Esophagus muscularis mucosa (tissue), 4 donors: ENCODE measurements at regions of chr12 and their contacts with region 1.

Region 1: DNA sequence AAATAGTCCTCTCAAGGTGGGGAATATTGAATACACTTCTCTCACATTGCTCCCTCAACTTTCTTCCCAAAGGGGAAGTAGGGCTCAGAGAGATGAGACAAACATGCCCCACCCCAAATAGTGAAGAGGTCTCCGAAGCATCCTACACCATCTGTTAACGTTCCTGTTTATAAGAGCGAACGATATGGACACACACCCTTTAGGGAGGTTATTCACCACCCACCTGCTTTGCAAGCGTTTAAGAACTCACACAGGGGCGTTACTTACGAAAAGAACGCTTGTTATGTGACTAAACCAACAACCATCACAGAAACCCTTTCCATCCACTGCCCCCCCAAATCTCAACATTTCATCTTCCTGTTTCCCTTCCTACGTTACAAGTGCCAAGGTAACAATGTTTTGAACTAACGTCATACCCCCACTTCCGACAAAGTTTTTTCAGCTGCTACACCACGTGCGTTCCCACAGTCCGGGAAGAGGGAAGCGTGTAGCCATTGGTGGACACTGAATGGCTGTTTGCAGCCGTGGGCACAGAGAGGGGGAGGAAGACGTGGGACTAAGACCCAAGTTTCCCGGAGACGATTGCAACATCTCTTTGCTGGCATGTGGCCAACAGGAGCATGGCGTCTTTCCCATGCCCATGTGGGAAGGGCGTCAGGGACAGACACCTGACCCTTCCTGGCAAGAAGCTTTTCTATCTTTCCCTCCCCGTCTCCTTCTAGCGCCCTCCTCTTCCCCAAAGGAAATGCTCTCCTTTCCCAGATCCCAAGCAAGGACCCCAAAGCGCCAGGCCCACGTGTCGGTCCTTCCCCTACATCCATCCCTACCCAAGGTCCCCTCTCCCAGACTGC is 1.2 kb downstream of the YBX3 start:
- DNase-seq: peak; percentile 99
- H3K4me3 ChIP-seq: peak overlapping the region; percentile 89 to 97 (median 94)
- H3K27ac ChIP-seq: peak overlapping the region; percentile 96 to 98 (median 98)
- H3K4me1 ChIP-seq: peaks cover 34 to 58% (median 55%) of the 10 kb centered on the region in 4 donors
- H3K27me3 ChIP-seq: no peaks in the 10 kb centered on the region
- CTCF ChIP-seq: no peak
- EP300 ChIP-seq: peak; percentile 92
- POLR2A ChIP-seq: peak; percentile 65

Region 2: DNA sequence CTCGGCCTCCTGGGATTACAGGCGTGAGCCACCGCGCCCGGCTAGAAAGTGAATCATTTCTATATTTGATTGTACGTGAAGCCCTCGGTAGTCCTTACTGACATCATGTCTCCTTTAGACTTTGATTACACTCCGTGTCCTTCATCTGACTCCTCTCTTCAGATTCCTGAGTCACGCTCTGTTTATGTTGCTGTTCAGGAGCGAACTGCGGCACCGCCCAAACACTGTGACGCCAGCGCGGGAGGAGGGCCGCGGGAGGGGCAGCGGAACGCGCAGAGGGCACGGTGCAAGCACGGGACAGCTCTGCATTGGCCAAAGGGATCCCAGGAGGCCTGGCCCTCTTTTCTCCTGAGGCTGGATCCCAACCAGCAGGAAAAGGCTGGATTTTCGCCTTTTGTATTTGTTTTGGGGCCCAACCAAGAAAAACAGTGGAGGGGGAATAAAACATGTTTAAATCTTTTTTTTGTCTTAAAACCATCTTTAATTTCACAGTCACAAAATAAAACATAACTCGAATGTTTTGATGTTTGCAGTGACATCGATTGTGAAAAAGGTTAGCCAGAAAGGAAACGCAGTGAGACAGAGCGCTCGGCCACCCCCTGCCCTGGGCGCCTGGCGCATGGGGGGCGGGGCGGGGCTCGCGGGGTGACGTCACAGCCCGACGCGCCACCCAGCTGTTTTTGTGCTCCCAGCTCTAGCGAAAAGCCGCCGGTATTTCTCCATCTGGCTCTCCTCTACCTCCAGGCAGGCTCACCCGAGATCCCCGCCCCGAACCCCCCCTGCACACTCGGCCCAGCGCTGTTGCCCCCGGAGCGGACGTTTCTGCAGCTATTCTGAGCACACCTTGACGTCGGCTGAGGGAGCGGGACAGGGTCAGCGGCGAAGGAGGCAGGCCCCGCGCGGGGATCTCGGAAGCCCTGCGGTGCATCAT is 509.4 kb before region 1 on chr12 and contains the start of gene GABARAPL1:
- intact Hi-C with region 1: loop called (anchors 10 kb)
- DNase-seq: peak; percentile 98
- H3K4me3 ChIP-seq: peak within 1 kb of the TSS; percentile 79 to 87 (median 82)
- H3K27ac ChIP-seq: peak within 1 kb of the TSS; percentile 96 to 100 (median 98)
- H3K4me1 ChIP-seq: peaks cover 20 to 34% (median 33%) of the 10 kb centered on the region in 4 donors
- H3K27me3 ChIP-seq: no peaks in the 10 kb centered on the region
- CTCF ChIP-seq: no peak
- EP300 ChIP-seq: peak; percentile 97
- POLR2A ChIP-seq: peak; percentile 25
- total RNA-seq, gene GABARAPL1: 142 to 352 (median 213) TPM

Region 3: GRCh38 chr12:10511756-10512355 is 210.0 kb before region 1 on chr12:
- intact Hi-C with region 1: no loop called
- DNase-seq: no peak
- H3K4me3 ChIP-seq: no peak overlapping the region
- H3K27ac ChIP-seq: no peak overlapping the region
- H3K4me1 ChIP-seq: no peaks in the 10 kb centered on the region
- H3K27me3 ChIP-seq: no peaks in the 10 kb centered on the region
- CTCF ChIP-seq: no peak
- EP300 ChIP-seq: no peak
- POLR2A ChIP-seq: no peak

Region 4: DNA sequence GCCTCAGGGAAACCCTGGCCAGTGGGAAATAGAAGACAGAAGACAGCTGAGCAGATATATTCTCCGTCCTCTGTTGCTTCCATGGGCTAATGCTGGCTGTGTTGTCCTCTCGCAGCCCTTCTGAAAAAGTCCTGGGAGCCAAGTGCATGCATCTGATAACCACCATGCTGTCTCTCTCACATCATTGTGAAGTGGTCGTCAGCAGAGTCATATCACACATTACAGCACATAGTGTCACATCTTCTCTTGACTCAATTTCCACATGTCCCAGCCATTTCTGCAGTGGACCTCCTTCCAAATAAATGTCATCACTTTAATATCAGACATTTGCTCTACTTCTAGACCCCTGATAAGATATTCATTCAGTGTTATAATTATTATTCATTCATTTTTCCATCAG is 272.4 kb after region 1 on chr12:
- intact Hi-C with region 1: no loop called
- DNase-seq: no peak
- H3K4me3 ChIP-seq: no peak overlapping the region
- H3K27ac ChIP-seq: no peak overlapping the region
- H3K4me1 ChIP-seq: no peaks in the 10 kb centered on the region
- H3K27me3 ChIP-seq: no peaks in the 10 kb centered on the region
- CTCF ChIP-seq: no peak
- EP300 ChIP-seq: no peak
- POLR2A ChIP-seq: no peak

Region 5: DNA sequence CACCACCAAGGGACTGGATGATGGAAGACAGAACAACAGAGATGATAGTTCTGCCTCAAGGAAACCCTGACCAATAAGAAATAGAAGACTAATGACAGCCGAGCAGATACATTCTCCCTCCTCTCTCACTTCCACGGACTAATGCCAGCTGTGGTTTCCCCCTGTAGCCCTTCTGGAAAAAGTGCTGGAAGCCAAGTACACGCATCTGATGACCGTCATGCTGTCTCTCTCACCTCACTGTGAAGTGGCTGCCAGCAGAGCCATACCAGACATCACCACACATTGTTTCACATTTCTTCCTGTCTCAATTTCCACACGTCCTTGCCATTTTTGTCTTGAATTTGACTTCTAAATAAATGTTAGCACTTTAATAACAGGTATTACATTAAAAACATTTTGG is 367.4 kb after region 1 on chr12:
- intact Hi-C with region 1: no loop called
- DNase-seq: no peak
- H3K4me3 ChIP-seq: no peak overlapping the region
- H3K27ac ChIP-seq: no peak overlapping the region
- H3K4me1 ChIP-seq: no peaks in the 10 kb centered on the region
- H3K27me3 ChIP-seq: no peaks in the 10 kb centered on the region
- CTCF ChIP-seq: no peak
- EP300 ChIP-seq: no peak
- POLR2A ChIP-seq: no peak